Prostate gland (tissue), 2 donors: ENCODE measurements at regions of chr10 and their contacts with region 1.

Region 1: DNA sequence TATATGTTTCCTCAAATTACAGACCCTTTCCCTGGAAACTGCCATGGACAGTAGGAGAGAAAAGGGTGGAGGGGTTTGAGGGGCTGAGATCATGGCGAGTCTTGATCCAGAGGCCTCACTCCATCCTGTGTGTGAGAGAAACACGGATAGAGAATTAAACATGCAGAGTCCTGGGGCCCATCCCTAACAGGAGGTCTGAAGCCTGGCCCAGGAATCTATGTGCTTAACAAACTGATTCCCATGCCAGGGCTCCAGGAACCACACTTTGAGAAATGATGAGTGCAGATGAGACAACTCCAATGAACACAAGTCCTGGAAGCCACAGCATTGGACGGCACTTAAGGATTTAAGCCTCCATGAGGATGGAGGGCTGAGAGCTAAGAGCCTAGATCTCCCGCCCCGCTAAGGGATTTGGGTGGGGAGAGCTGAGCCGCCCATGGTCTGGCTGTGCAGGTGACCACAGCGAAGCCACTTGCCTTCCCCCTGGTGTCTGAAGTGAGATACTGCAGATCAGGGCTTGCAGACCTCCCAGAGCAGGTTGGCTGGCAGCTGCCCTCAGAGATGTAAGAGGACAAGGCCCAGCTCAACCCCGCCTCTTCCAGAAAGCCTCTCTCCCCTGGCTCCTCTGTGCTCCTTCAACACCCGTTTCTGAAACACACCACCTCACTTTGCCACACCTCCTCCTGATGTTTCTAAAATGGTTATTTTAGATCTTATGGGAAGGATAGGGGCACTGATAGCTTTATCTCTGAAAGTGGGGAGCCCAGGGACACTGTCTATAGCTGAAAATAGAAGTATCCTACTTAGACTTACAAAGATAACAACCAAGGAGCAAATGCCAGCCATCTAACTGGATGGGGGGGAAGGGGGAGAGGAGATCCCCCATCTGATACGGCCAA is 24.8 kb upstream of the EIF5AL1 start:
- DNase-seq: peak; percentile 41
- H3K4me3 ChIP-seq: no peak overlapping the region
- H3K27ac ChIP-seq: peak overlapping the region in 1 of 2 donors; percentile 42
- H3K4me1 ChIP-seq: no peaks in the 10 kb centered on the region
- H3K27me3 ChIP-seq: no peaks in the 10 kb centered on the region
- CTCF ChIP-seq: peak in 3 of 4 experiments; percentile 59 to 70 (median 70)
- POLR2A ChIP-seq: no peak

Region 2: GRCh38 chr10:79374312-79375191 is 113.0 kb before region 1 on chr10:
- intact Hi-C with region 1: loop called (anchors 5 kb)
- DNase-seq: peak; percentile 64
- H3K4me3 ChIP-seq: no peak overlapping the region
- H3K27ac ChIP-seq: no peak overlapping the region
- H3K4me1 ChIP-seq: no peaks in the 10 kb centered on the region
- H3K27me3 ChIP-seq: no peaks in the 10 kb centered on the region
- CTCF ChIP-seq: peak; percentile 94 to 98 (median 96)
- POLR2A ChIP-seq: no peak

Region 3: GRCh38 chr10:79445141-79445976 is 42.2 kb before region 1 on chr10 and contains the start of gene ZCCHC24:
- intact Hi-C with region 1: loop called (anchors 5 kb)
- DNase-seq: peak; percentile 97
- H3K4me3 ChIP-seq: peak within 1 kb of the TSS; percentile 84 to 89
- H3K27ac ChIP-seq: peak within 1 kb of the TSS; percentile 75 to 87
- H3K4me1 ChIP-seq: peaks cover 2% of the 10 kb centered on the region
- H3K27me3 ChIP-seq: no peaks in the 10 kb centered on the region
- CTCF ChIP-seq: peak in 1 of 4 experiments; percentile 13
- POLR2A ChIP-seq: peak; percentile 23
- total RNA-seq, gene ZCCHC24: 20.8 to 51.2 TPM